CD4-positive, alpha-beta memory T cell (primary cell): ENCODE measurements at regions of chr17 and their contacts with region 1.

Region 1: GRCh38 chr17:32877164-32877764 is 340 bp upstream of the MYO1D start:
- DNase-seq: peak; percentile 87 to 97 (median 95)
- H3K4me3 ChIP-seq: peak overlapping the region in 1 of 2 donors; percentile 62
- H3K4me3 Mint-ChIP-seq: peak overlapping the region; percentile 82 to 91 (median 85)
- H3K27ac ChIP-seq: no peak overlapping the region
- H3K27ac Mint-ChIP-seq: peak overlapping the region; percentile 57 to 97 (median 89)
- H3K4me1 ChIP-seq: peaks cover 18% of the 10 kb centered on the region
- H3K4me1 Mint-ChIP-seq: peaks cover 6 to 19% (median 11%) of the 10 kb centered on the region in 4 donors
- H3K27me3 ChIP-seq: no peaks in the 10 kb centered on the region
- H3K27me3 Mint-ChIP-seq: peaks cover 0 to 2% of the 10 kb centered on the region in 2 donors

Region 2: DNA sequence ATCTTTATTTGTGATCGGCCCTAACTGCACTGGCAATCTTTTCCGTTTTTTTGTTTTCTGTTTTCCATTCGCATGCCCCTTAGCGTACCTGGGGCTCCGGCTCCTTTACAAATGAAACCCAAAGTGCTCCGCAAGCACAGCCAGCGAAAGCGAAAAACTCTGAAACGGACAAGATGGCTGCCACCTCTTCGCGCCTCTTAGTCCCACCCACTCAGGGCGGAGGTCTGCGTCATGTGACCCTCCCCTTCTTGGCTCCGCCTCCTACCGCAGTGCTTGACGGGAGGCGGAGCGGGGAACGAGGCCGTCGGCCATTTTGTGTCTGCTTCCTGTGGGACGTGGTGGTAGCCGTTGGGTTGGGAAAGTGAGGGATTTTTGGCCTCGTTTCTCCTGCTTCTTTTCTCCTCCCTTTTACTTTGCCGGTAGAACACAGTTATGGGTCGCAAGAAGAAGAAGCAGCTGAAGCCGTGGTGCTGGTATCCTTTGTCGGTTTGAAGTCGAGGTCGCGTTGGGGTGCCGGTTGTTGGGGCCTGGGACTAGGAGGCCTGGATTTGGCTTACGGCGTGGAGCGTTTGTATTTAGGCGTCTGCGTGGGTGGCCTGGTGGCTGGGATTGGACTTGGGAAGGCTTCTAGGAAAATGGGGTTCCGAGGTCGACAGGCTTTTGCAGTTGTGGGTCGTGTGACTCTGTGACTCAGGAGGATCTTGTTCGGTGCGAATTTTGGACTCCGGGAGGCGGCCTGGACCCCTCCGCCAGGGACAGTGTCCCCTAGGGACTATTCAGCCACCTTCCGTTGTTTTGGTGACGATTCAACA is 527.2 kb before region 1 on chr17 and contains the start of gene ZNF207:
- CTCF ChIA-PET with region 1: no interaction called
- POLR2A ChIA-PET with region 1: interaction called, 3 read pairs
- intact Hi-C with region 1: loop called (anchors 10 kb)
- DNase-seq: peak; percentile 94 to 96 (median 95)
- H3K4me3 ChIP-seq: peak within 1 kb of the TSS; percentile 96 to 100
- H3K4me3 Mint-ChIP-seq: peak within 1 kb of the TSS; percentile 97 to 100 (median 100)
- H3K27ac ChIP-seq: peak within 1 kb of the TSS; percentile 100
- H3K27ac Mint-ChIP-seq: peak within 1 kb of the TSS; percentile 98 to 100 (median 100)
- H3K4me1 ChIP-seq: peaks cover 45% of the 10 kb centered on the region
- H3K4me1 Mint-ChIP-seq: peaks cover 23 to 54% (median 38%) of the 10 kb centered on the region in 4 donors
- H3K27me3 ChIP-seq: no peaks in the 10 kb centered on the region
- H3K27me3 Mint-ChIP-seq: no peaks in the 10 kb centered on the region
- total RNA-seq, gene ZNF207: 267 to 298 TPM

Region 3: GRCh38 chr17:32769839-32770238 is 107.4 kb before region 1 on chr17:
- CTCF ChIA-PET with region 1: interaction called, 13 read pairs
- POLR2A ChIA-PET with region 1: no interaction called
- intact Hi-C with region 1: no loop called
- DNase-seq: no peak
- H3K4me3 ChIP-seq: no peak overlapping the region
- H3K4me3 Mint-ChIP-seq: no peak overlapping the region
- H3K27ac ChIP-seq: no peak overlapping the region
- H3K27ac Mint-ChIP-seq: no peak overlapping the region
- H3K4me1 ChIP-seq: no peaks in the 10 kb centered on the region
- H3K4me1 Mint-ChIP-seq: no peaks in the 10 kb centered on the region
- H3K27me3 ChIP-seq: no peaks in the 10 kb centered on the region
- H3K27me3 Mint-ChIP-seq: no peaks in the 10 kb centered on the region

Region 4: GRCh38 chr17:32783602-32784001 is 93.7 kb before region 1 on chr17:
- CTCF ChIA-PET with region 1: interaction called, 77 read pairs
- POLR2A ChIA-PET with region 1: interaction called, 13 read pairs
- intact Hi-C with region 1: loop called (anchors 1 kb)
- DNase-seq: peak in 4 of 5 donors; percentile 46 to 55 (median 50)
- H3K4me3 ChIP-seq: no peak overlapping the region
- H3K4me3 Mint-ChIP-seq: no peak overlapping the region
- H3K27ac ChIP-seq: no peak overlapping the region
- H3K27ac Mint-ChIP-seq: no peak overlapping the region
- H3K4me1 ChIP-seq: no peaks in the 10 kb centered on the region
- H3K4me1 Mint-ChIP-seq: no peaks in the 10 kb centered on the region
- H3K27me3 ChIP-seq: no peaks in the 10 kb centered on the region
- H3K27me3 Mint-ChIP-seq: no peaks in the 10 kb centered on the region

Region 5: DNA sequence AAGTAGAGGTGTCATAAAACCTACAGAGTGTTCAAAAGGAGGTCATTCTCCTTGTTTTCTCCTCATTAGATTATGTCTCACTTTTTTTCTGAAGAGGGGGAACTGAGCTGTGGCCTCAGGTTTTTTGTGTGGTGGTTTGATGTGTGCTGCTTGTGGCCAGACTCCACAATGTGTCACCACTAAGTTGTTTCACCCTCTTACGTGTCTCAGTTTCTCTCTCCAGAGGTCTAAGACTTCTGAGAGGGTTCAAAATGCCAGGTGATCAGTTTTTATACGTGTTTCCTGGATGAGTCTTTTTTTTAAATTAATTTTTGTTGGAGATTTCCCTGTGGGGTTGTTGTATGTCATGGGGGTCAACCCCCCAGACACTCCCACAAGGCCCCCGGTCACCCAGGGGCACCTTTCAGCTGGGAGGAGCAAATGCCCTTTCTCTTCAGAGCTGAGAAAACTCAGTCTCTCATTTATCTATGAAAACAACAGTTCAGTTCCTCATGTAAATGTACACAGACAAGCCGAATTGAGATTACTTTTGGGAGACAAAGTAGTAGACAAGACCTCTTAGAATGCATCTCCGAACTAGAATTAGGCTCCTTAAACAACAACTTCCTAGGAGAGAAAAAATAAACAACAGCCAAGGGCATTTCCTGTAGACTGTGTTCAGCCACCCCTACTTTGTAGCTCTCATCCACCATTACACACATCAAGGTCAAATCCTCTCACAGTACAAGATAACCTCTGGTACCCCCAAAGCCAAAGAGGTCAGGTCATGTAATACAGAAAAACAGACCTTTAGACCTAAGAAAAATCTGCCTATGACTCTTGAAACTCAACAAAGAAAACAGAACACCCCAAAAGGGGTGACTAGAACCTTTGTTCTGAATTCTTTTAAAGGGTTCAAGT is 26.8 kb after region 1 on chr17:
- CTCF ChIA-PET with region 1: interaction called, 11 read pairs
- POLR2A ChIA-PET with region 1: no interaction called
- intact Hi-C with region 1: no loop called
- DNase-seq: no peak
- H3K4me3 ChIP-seq: no peak overlapping the region
- H3K4me3 Mint-ChIP-seq: no peak overlapping the region
- H3K27ac ChIP-seq: no peak overlapping the region
- H3K27ac Mint-ChIP-seq: peak overlapping the region in 1 of 7 donors; percentile 60
- H3K4me1 ChIP-seq: no peaks in the 10 kb centered on the region
- H3K4me1 Mint-ChIP-seq: peaks cover 0 to 3% (median 1%) of the 10 kb centered on the region in 4 donors
- H3K27me3 ChIP-seq: no peaks in the 10 kb centered on the region
- H3K27me3 Mint-ChIP-seq: peaks cover 5 to 6% of the 10 kb centered on the region in 2 donors

Region 6: GRCh38 chr17:32936894-32937500 is 59.7 kb after region 1 on chr17:
- CTCF ChIA-PET with region 1: interaction called, 18 read pairs
- POLR2A ChIA-PET with region 1: no interaction called
- intact Hi-C with region 1: no loop called
- DNase-seq: peak; percentile 38 to 53 (median 49)
- H3K4me3 ChIP-seq: no peak overlapping the region
- H3K4me3 Mint-ChIP-seq: peak overlapping the region in 3 of 8 donors; percentile 30 to 67 (median 65)
- H3K27ac ChIP-seq: no peak overlapping the region
- H3K27ac Mint-ChIP-seq: peak overlapping the region in 1 of 7 donors; percentile 62
- H3K4me1 ChIP-seq: peaks cover 4% of the 10 kb centered on the region
- H3K4me1 Mint-ChIP-seq: peaks cover 0 to 6% (median 4%) of the 10 kb centered on the region in 4 donors
- H3K27me3 ChIP-seq: no peaks in the 10 kb centered on the region
- H3K27me3 Mint-ChIP-seq: peaks cover 14 to 28% of the 10 kb centered on the region in 2 donors